ENCODE measurements at regions of chr2 and their contacts with region 1.

Region 1: DNA sequence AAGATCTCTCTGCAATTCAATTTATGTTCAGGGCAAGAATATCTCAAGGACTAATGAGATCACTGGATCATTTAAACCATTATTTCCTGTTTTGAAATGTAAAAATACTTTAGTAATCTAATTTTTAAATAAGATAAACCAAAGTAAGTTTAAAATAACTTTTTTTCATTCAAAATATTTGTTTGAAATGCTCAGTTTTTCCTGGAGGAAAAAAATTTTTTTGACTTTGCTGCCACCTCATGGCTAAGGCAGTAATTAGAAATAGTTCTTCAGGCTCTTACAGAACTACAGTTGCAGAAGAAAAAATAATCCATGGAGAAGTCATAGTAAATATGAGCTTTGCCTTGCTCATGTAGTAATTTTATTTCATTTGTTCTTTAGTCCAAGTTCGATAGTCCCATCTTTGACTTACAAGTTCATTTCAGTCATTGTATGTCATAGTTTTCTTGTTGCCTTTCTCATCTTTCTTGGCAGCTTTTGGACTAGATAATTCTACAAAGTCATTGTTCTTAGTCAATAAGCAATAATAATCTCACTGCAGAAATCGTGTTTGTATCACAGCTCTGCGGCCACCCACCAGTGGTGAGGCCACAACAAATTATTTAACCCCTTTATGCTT is 127.4 kb downstream of the DPP4 start:
- DNase-seq: no peak
- ATAC-seq: no peak
- H3K4me3 ChIP-seq: no peak overlapping the region
- H3K27ac ChIP-seq: no peak overlapping the region
- H3K4me1 ChIP-seq: no peaks in the 10 kb centered on the region
- H3K27me3 ChIP-seq: peaks cover 5% of the 10 kb centered on the region
- CTCF ChIP-seq: peak; percentile 58

Region 2: GRCh38 chr2:161586517-161587167 is 360.0 kb before region 1 on chr2:
- intact Hi-C with region 1: loop called (anchors 10 kb)
- DNase-seq: no peak
- ATAC-seq: peak; percentile 32
- H3K4me3 ChIP-seq: no peak overlapping the region
- H3K27ac ChIP-seq: no peak overlapping the region
- H3K4me1 ChIP-seq: no peaks in the 10 kb centered on the region
- H3K27me3 ChIP-seq: no peaks in the 10 kb centered on the region
- CTCF ChIP-seq: peak; percentile 61

Region 3: DNA sequence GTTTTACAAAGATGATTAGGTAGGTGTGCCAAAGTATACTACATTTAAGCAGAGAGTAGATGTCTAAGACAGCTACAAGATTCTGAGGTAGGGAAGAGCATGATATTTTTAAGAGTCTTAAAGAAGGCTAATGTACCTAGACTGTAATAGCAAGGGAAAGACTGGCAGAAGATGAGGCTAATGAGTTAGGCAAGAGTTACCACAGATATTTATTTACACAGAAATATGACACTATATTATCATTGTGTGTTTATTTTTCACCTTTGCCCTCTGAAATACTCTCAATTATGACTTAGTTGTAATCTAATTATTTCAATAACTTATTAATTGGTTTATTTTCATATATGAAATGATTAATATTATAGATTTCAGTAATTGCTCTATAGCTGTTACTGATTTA is 115.6 kb before region 1 on chr2:
- intact Hi-C with region 1: no loop called
- DNase-seq: no peak
- ATAC-seq: no peak
- H3K4me3 ChIP-seq: no peak overlapping the region
- H3K27ac ChIP-seq: no peak overlapping the region
- H3K4me1 ChIP-seq: no peaks in the 10 kb centered on the region
- H3K27me3 ChIP-seq: no peaks in the 10 kb centered on the region
- CTCF ChIP-seq: no peak